ENCODE measurements at regions of chr20 and their contacts with region 1.

Region 1: GRCh38 chr20:44642203-44643153 is 9.0 kb downstream of the ADA start:
- DNase-seq: peak; percentile 82
- H3K4me3 ChIP-seq: no peak overlapping the region
- H3K27ac ChIP-seq: peak overlapping the region; percentile 58
- H3K4me1 ChIP-seq: peaks cover 36% of the 10 kb centered on the region
- H3K27me3 ChIP-seq: no peaks in the 10 kb centered on the region
- CTCF ChIP-seq: peak in 1 of 2 donors; percentile 35

Region 2: GRCh38 chr20:44594730-44595129 is 47.7 kb before region 1 on chr20:
- CTCF ChIA-PET with region 1: no interaction called
- dilution Hi-C with region 1: loop called (anchors 5 kb)
- in situ Hi-C with region 1: no loop called
- intact Hi-C with region 1: no loop called
- DNase-seq: peak; percentile 56
- H3K4me3 ChIP-seq: no peak overlapping the region
- H3K27ac ChIP-seq: no peak overlapping the region
- H3K4me1 ChIP-seq: peaks cover 5% of the 10 kb centered on the region
- H3K27me3 ChIP-seq: no peaks in the 10 kb centered on the region
- CTCF ChIP-seq: no peak

Measured in mammary epithelial cell (primary cell).